ENCODE measurements at regions of chr20 and their contacts with region 1.

Region 1: DNA sequence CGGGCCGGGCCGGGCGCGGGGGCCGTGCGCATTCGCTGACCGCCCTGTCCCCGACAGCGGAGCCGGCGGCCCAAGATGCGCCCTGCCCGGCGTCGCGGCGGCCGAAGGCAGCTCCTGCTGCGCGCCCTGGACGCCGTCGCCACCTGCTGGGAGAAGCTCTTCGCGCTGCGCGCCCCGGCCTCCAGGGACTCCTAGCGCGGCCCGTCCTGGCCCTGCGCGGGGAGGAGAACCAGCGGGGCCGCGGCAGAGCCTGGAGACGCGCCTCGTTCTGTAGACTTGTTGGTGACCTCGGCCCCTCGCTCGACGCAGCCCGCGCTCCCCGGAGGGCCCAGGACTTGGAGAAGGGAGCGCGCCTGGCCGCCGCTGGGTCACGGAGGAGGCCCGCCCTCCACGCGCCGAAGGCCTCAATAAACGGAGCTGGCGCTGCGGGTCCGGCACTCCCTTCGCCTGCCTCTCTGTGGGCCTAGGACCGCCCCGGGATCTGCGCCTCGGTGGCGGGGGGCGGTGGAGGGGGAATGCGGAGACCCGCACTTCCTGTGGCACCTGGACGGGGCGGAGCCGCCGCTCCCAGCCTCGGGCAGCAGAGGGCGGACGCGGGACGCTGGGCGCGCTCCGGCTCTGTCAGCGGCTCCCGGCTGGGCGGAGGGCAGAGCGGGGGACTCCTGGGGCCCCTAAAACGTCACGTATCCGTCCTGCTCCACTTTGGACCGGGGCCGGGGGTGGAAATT is 2.7 kb downstream of the C20orf204 start:
- DNase-seq: peak; percentile 84
- H3K4me3 Mint-ChIP-seq: peak overlapping the region; percentile 60
- H3K27ac Mint-ChIP-seq: no peak overlapping the region
- H3K4me1 Mint-ChIP-seq: peaks cover 43% of the 10 kb centered on the region
- H3K27me3 Mint-ChIP-seq: peaks cover 2% of the 10 kb centered on the region

Region 2: GRCh38 chr20:63955827-63956663 is 82.7 kb before region 1 on chr20 and contains the start of gene UCKL1:
- CTCF ChIA-PET with region 1: no interaction called
- POLR2A ChIA-PET with region 1: no interaction called
- intact Hi-C with region 1: loop called (anchors 2 kb)
- DNase-seq: peak; percentile 92
- H3K4me3 Mint-ChIP-seq: peak within 1 kb of the TSS; percentile 81
- H3K27ac Mint-ChIP-seq: peak within 1 kb of the TSS; percentile 89
- H3K4me1 Mint-ChIP-seq: peaks cover 35% of the 10 kb centered on the region
- H3K27me3 Mint-ChIP-seq: no peaks in the 10 kb centered on the region
- total RNA-seq, gene UCKL1: 26.6 to 29.6 TPM

Region 3: DNA sequence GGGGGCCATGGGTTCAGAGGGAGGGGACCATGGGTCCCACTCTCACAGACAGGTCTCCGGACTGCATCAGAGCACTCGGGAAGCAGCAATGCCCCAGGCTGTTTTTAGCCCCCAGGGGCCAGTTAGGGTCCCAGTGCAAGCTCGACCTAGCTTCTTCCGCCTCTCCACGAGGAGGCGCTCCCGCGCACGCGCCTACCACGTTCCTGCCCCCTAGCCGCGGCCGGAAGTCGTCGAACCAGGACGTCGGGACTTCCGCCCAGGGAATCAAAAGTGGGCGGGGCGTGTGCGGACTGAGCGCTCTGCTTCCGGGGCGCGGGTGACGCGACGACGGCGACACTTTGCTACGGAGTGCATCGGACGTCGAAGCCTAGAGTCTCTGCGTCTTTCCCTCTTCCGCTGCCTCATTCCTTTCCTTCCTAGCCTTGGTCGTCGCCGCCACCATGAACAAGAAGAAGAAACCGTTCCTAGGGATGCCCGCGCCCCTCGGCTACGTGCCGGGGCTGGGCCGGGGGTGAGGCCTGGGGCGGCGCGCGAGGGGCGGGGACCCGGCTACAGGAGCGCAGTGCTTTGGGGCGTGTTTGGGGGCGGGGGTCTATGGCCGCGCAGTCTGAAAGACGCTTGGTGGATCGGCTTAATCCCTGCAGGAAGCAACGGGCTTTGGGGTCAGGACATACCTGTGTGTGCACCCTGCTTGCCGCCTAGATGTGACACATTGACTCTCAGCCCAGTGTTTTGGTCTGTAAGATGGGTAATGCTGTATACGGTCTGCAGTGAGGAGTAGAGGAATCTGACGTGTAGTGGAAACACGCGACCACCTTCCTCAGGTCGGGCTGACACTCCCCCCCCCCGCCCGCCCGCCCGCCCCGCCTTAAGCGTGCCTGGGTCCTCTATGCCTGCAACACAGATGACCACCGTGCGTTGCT is 57.7 kb before region 1 on chr20 and contains the start of gene PRPF6:
- CTCF ChIA-PET with region 1: interaction called, 59 read pairs
- POLR2A ChIA-PET with region 1: interaction called, 13 read pairs
- intact Hi-C with region 1: loop called (anchors 1 kb)
- DNase-seq: peak; percentile 97
- H3K4me3 Mint-ChIP-seq: peak within 1 kb of the TSS; percentile 84
- H3K27ac Mint-ChIP-seq: peak within 1 kb of the TSS; percentile 96
- H3K4me1 Mint-ChIP-seq: peaks cover 60% of the 10 kb centered on the region
- H3K27me3 Mint-ChIP-seq: no peaks in the 10 kb centered on the region
- total RNA-seq, gene PRPF6: 62.3 to 63.1 TPM

Region 4: DNA sequence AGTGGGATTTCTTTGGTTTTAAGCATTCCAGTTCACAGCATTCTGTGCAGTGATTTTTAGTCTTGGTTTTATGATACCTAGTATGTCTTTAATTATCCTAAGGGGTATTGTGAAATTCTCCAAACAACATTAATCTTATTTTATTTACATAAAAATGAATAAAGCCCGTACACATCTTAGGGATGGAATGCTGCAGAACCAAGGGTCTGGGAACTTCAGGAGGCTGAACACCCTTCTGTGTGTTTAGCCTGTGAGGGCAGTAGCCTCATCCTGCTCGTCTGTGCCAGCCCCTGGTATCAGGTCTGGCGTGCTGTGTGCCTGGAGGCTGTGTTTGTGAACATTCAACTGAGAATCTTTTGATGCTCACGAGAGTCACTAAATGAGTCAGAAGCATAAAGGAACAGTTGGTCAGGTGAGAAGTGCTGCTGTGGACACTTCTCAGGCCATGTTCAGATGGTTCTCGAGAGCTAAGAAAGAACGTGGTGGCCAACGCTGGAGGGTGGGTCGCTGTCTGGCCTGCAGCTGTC is 28.0 kb before region 1 on chr20:
- CTCF ChIA-PET with region 1: interaction called, 5 read pairs
- POLR2A ChIA-PET with region 1: no interaction called
- intact Hi-C with region 1: loop called (anchors 1 kb)
- DNase-seq: peak; percentile 18
- H3K4me3 Mint-ChIP-seq: no peak overlapping the region
- H3K27ac Mint-ChIP-seq: peak overlapping the region; percentile 90
- H3K4me1 Mint-ChIP-seq: peaks cover 25% of the 10 kb centered on the region
- H3K27me3 Mint-ChIP-seq: no peaks in the 10 kb centered on the region

Region 5: DNA sequence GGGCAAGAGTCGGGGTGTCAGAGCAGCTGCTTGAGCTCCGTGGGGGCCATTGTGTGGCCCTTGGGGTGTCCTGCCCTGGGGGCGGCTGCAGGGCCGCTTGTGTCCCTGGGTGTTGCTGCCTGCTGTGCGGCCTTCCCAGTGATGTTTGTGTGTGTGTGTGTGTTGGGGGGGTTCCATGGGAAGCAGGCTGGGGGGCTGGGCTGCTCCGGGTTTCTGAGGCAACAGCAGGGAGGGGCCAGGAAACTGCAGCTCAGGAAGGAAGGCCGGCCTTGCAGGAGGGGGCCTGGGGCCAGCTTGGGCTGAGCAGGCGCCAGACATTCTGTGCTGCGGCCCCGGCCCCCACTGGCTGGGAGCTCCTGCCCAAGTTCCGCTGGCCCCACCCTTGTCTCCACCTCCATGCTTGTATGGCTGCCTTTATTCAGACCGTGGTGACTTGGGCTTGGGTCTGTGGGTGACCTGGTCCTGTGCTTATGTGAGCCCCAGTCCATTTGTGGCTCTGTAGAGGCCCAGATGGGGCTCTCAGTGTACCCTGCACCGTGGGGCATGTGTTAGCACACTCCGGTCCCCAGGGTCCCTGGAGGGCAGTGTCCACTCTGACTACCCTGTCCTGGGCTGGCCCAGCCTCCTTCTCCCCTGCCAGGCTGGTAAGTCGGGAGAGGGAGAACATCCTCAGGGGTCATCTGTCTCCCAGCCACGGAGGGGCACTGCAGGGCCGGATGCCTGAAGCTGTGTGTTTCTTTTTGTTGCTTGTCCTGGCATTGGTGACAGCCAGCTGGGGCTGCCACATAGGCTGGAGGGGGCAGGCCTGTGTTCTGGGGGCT is 15.3 kb after region 1 on chr20:
- CTCF ChIA-PET with region 1: interaction called, 38 read pairs
- POLR2A ChIA-PET with region 1: interaction called, 5 read pairs
- intact Hi-C with region 1: loop called (anchors 1 kb)
- DNase-seq: no peak
- H3K4me3 Mint-ChIP-seq: no peak overlapping the region
- H3K27ac Mint-ChIP-seq: no peak overlapping the region
- H3K4me1 Mint-ChIP-seq: peaks cover 16% of the 10 kb centered on the region
- H3K27me3 Mint-ChIP-seq: peaks cover 37% of the 10 kb centered on the region

Region 6: GRCh38 chr20:64079273-64080012 is 40.7 kb after region 1 on chr20 and contains the start of gene RGS19:
- CTCF ChIA-PET with region 1: interaction called, 18 read pairs
- POLR2A ChIA-PET with region 1: no interaction called
- intact Hi-C with region 1: no loop called
- DNase-seq: peak; percentile 76
- H3K4me3 Mint-ChIP-seq: peak within 1 kb of the TSS; percentile 90
- H3K27ac Mint-ChIP-seq: peak within 1 kb of the TSS; percentile 92
- H3K4me1 Mint-ChIP-seq: peaks cover 27% of the 10 kb centered on the region
- H3K27me3 Mint-ChIP-seq: peaks cover 3% of the 10 kb centered on the region
- total RNA-seq, gene RGS19: 43.2 to 44.4 TPM

Region 7: GRCh38 chr20:64119681-64120341 is 81.1 kb after region 1 on chr20:
- CTCF ChIA-PET with region 1: interaction called, 47 read pairs
- POLR2A ChIA-PET with region 1: no interaction called
- intact Hi-C with region 1: loop called (anchors 1 kb)
- DNase-seq: no peak
- H3K4me3 Mint-ChIP-seq: peak overlapping the region; percentile 35
- H3K27ac Mint-ChIP-seq: no peak overlapping the region
- H3K4me1 Mint-ChIP-seq: peaks cover 8% of the 10 kb centered on the region
- H3K27me3 Mint-ChIP-seq: peaks cover 8% of the 10 kb centered on the region

Measured in activated CD4-positive, alpha-beta memory T cell treated with anti-CD3 and anti-CD28 coated beads for 36 hours (primary cell).